ENCODE measurements at regions of chr16 and their contacts with region 1.

Region 1: GRCh38 chr16:65667011-65667578 is 545.2 kb upstream of the CDH11 start:
- DNase-seq: no peak
- H3K4me3 ChIP-seq: no peak overlapping the region
- H3K27ac ChIP-seq: no peak overlapping the region
- H3K27me3 ChIP-seq: no peaks in the 10 kb centered on the region
- CTCF ChIP-seq: peak in 8 of 56 donors; percentile 3 to 27 (median 17)

Region 2: DNA sequence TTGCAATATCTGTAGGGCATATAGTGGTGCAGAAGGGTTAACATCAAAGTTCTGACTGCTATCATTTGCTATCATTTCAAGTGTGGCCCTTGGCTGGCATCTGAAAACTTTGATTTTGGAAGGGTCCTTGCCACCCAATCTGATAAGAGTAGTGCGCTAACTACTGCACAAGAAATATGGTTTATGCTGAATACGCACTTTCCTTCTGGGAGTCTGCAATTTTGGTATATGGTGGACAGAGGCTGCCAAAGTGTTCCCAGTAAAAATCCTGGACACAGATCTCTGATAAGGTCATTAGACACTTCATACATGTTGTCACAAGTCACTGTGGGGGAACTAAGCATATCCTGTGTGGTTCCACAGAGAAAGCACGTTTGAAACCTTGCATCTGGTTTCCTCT is 83.6 kb before region 1 on chr16:
- intact Hi-C with region 1: loop called in 1 of 2 experiments (anchors 10 kb)
- DNase-seq: no peak
- H3K4me3 ChIP-seq: no peak overlapping the region
- H3K27ac ChIP-seq: no peak overlapping the region
- H3K27me3 ChIP-seq: no peaks in the 10 kb centered on the region
- CTCF ChIP-seq: no peak

Region 3: DNA sequence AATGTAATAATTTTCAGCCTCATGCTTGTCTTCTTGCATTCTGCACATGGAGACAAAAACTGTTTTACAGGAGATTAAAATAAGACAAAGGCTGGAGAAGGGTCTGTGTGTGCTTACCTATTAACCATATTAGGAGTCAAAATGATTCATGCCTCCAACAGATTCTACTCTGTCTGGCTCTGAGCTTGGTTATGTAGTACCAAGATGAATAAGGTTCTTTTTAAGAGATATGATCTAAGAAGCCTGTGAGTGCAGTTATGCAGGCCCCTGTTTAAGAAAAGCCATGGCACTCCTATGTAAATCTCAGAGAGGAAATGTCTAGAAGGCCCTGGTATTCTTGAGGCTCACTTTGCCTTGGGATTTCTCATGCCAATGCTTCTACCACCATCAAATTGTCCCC is 58.6 kb before region 1 on chr16:
- intact Hi-C with region 1: no loop called
- DNase-seq: no peak
- H3K4me3 ChIP-seq: no peak overlapping the region
- H3K27ac ChIP-seq: no peak overlapping the region
- H3K27me3 ChIP-seq: no peaks in the 10 kb centered on the region
- CTCF ChIP-seq: no peak

Measured in dorsolateral prefrontal cortex (tissue), 120 donors.